ENCODE measurements at regions of chr5 and their contacts with region 1.

Region 1: GRCh38 chr5:119274767-119275130 is 81.1 kb upstream of the TNFAIP8 start:
- DNase-seq: no peak
- ATAC-seq: peak; percentile 48
- H3K4me3 Mint-ChIP-seq: peak overlapping the region; percentile 68
- H3K27ac Mint-ChIP-seq: peak overlapping the region; percentile 87
- H3K4me1 Mint-ChIP-seq: peaks cover 88% of the 10 kb centered on the region
- H3K27me3 Mint-ChIP-seq: no peaks in the 10 kb centered on the region

Region 2: DNA sequence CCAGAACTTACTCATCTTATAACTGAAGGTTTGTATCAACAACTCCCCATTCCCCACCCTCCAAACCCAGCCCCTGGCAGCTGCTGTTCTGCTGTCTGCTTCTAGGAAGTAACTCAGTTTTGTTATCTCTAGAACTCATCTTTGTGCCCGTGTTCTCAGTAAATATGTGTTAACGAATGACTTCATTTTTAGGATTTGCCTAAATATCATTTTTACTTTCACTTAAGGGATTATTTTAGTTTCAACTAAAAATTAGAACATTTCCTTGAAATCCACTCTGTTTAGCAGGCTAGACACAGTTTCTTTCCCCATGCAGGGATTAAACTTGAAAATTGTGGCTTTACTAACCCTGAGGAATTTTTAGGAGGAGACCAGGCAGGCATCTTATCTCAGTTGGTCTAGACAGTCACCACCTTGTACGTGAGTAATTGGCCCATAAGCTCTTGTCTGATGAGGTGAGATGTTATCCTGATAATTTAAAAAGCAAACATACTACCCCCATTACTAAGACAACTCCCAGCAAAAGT is 12.9 kb after region 1 on chr5:
- CTCF ChIA-PET with region 1: interaction called, 20 read pairs
- DNase-seq: peak; percentile 64
- ATAC-seq: peak; percentile 64
- H3K4me3 Mint-ChIP-seq: peak overlapping the region; percentile 69
- H3K27ac Mint-ChIP-seq: peak overlapping the region; percentile 92
- H3K4me1 Mint-ChIP-seq: peaks cover 89% of the 10 kb centered on the region
- H3K27me3 Mint-ChIP-seq: no peaks in the 10 kb centered on the region

Measured in activated CD8-positive, alpha-beta memory T cell treated with anti-CD3 and anti-CD28 coated beads, Interleukin-2, amount 10 ng/mL, durations not matched to agents 7 days and 5 days (primary cell).